PC-9 (cell line): ENCODE measurements at regions of chr3 and their contacts with region 1.

Region 1: GRCh38 chr3:188646592-188646991 is 492.6 kb downstream of the LPP start:
- DNase-seq: no peak
- H3K4me3 ChIP-seq: no peak overlapping the region
- H3K27ac ChIP-seq: no peak overlapping the region
- H3K4me1 ChIP-seq: no peaks in the 10 kb centered on the region
- H3K27me3 ChIP-seq: no peaks in the 10 kb centered on the region
- CTCF ChIP-seq: no peak

Region 2: DNA sequence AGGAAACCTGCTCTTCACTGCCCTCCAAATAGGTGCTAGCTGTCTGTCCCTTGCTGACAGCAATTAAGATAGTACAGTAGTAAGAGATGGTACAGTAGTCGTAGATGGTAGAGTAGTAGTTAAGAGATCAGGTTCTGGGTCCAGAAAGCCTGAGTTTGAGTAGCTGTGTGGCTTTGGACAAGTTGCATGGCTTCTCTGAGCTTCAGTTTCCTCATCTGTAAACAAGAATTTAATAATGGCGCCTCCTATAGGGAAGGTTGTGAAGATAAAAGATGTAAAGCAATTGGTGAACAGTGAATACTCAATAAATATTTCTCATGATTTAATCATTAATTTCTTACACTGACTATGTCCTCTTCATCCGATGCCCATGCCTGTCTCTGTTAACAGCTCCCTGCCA is 814.4 kb before region 1 on chr3:
- CTCF ChIA-PET with region 1: interaction called, 19 read pairs
- POLR2A ChIA-PET with region 1: no interaction called
- intact Hi-C with region 1: no loop called
- DNase-seq: peak in 1 of 2 experiments; percentile 25
- H3K4me3 ChIP-seq: no peak overlapping the region
- H3K27ac ChIP-seq: no peak overlapping the region
- H3K4me1 ChIP-seq: 0 out of 2 replicates have a peak, but pooled peaks cover 3% of the 10 kb centered on the region
- H3K27me3 ChIP-seq: no peaks in the 10 kb centered on the region
- CTCF ChIP-seq: no peak; the same call in 1 of the 2 replicates

Region 3: GRCh38 chr3:188389711-188390342 is 256.8 kb before region 1 on chr3:
- CTCF ChIA-PET with region 1: no interaction called
- POLR2A ChIA-PET with region 1: interaction called, 18 read pairs
- intact Hi-C with region 1: no loop called
- DNase-seq: no peak
- H3K4me3 ChIP-seq: no peak overlapping the region
- H3K27ac ChIP-seq: no peak overlapping the region
- H3K4me1 ChIP-seq: peaks cover 14% of the 10 kb centered on the region; the same call in 1 of the 2 replicates
- H3K27me3 ChIP-seq: no peaks in the 10 kb centered on the region
- CTCF ChIP-seq: no peak

Region 4: DNA sequence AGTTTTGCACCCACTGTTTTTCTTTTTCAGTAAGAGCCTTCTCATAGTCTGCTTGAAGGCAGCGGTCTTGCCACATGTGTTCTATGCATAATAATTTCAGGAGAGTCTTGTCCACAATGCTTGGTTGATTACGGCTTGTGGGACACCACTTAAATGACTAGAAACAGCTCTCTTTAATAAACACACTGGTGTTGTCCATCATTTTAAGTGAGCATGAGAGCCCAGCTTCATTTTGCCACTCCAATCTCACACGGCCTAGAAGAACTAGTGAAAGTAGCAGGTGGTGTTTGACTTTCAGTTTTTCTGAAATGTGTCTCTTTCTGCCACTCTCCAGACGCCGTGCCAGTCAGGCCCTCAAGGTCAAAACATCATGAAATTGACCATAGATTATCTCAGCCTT is 200.6 kb before region 1 on chr3:
- CTCF ChIA-PET with region 1: no interaction called
- POLR2A ChIA-PET with region 1: no interaction called
- intact Hi-C with region 1: no loop called
- DNase-seq: no peak
- H3K4me3 ChIP-seq: no peak overlapping the region
- H3K27ac ChIP-seq: no peak overlapping the region
- H3K4me1 ChIP-seq: no peaks in the 10 kb centered on the region
- H3K27me3 ChIP-seq: no peaks in the 10 kb centered on the region
- CTCF ChIP-seq: no peak

Region 5: DNA sequence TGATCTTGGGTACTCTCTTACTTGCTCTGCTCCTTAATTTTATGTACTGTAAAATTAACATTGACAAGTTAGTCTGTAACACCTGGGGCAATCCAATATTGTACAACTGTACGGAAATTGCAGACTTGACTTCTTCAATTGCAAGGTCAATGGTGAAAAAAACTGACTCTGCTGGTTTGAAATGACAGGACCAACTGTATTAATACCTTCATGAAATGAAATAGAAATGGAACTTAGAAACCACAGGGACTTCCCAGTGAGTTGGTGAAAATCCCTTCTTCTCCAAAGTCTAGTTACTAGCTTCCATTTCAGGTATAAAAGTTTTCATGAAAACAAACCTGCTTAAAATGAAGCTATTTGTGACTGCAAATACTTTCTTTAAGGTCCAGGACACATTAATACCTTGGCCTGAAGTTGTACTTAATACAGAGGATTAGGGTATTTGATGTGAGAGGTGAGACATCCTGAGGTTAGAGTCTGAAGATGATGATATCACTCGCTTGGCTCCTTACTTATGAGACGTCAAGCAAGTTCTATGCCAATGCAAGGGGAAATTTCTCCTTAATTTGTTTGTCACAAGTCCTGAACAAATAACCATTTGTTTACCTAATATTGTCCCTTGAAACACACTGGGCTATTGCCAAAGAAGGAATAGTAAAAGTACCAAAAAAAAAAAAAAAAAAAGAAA is 758.3 kb after region 1 on chr3:
- CTCF ChIA-PET with region 1: no interaction called
- POLR2A ChIA-PET with region 1: no interaction called
- intact Hi-C with region 1: no loop called
- DNase-seq: no peak
- H3K4me3 ChIP-seq: no peak overlapping the region
- H3K27ac ChIP-seq: no peak overlapping the region
- H3K4me1 ChIP-seq: no peaks in the 10 kb centered on the region
- H3K27me3 ChIP-seq: no peaks in the 10 kb centered on the region
- CTCF ChIP-seq: no peak